Heart right ventricle (tissue), 16 donors: ENCODE measurements at regions of chr20 and their contacts with region 1.

Region 1: DNA sequence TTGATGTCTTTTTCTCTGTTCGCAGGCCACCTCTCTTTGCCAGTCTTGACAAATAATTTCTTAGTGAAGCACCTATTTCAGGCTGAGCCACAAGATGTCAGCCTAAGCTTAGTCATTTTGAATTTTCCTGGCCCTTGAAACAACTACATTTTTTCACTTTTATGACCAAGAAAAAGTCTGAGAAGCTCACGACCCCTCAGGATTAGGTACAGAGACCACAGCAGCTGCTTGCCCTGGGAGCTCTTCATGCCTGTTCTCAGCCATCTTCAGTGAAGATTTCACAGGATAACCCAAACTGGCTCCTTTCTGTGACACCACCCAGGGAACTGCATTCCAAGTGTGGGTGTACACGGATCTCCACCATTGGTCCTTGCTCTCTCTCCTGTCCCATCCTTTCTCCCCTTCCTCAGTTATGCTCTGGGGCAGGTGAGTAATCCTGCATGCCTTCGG is 38.4 kb upstream of the SPTLC3 start:
- DNase-seq: peak in 1 of 2 donors; percentile 6
- ATAC-seq: peak in 4 of 8 donors; percentile 38 to 54 (median 43)
- H3K4me3 ChIP-seq: no peak overlapping the region
- H3K27ac ChIP-seq: no peak overlapping the region
- H3K4me1 ChIP-seq: no peaks in the 10 kb centered on the region
- H3K27me3 ChIP-seq: no peaks in the 10 kb centered on the region
- CTCF ChIP-seq: peak in 8 of 9 donors; percentile 18 to 71 (median 61)

Region 2: DNA sequence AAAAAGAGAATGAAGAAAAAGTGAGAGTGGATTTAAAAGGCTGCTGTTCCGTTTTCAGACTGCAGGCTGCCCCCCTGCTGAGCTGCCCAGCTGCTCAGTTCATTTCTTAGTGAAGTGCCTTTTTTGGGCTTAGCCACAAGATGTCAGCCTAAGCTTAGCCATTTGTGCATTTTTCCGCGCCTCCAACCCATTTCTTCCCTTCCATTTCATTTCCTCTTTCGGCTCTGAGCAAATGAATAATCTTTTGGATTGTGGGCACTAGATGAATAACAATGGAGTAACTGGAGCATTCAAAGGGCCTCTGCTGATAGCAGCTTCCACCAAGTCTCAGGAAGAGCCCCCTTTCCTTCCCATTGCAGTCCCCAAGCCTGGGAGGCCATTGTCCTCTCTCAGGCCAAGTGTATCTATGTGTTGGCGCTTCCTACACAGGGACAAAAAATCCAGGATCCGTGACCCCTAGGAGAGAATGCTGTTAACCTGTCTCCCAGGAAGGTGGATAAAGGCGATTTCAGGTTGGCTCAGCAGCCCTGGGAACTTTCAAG is 45.1 kb before region 1 on chr20:
- intact Hi-C with region 1: loop called in 4 of 10 experiments (anchors 5 kb)
- DNase-seq: peak in 1 of 2 donors; percentile 29
- ATAC-seq: peak; percentile 73 to 92 (median 86)
- H3K4me3 ChIP-seq: no peak overlapping the region
- H3K27ac ChIP-seq: no peak overlapping the region
- H3K4me1 ChIP-seq: peaks cover 0 to 3% (median 0%) of the 10 kb centered on the region in 9 donors
- H3K27me3 ChIP-seq: peaks cover 0 to 13% (median 0%) of the 10 kb centered on the region in 7 donors
- CTCF ChIP-seq: peak; percentile 49 to 85 (median 73)